WTC11 (cell line): ENCODE measurements at regions of chr15 and their contacts with region 1.

Region 1: GRCh38 chr15:89430530-89431341 is 65.6 kb downstream of the RHCG start:
- DNase-seq: peak; percentile 96
- ATAC-seq: peak; percentile 95
- H3K4me3 Mint-ChIP-seq: peak overlapping the region; percentile 72
- H3K27ac Mint-ChIP-seq: no peak overlapping the region
- H3K4me1 Mint-ChIP-seq: peaks cover 15% of the 10 kb centered on the region
- H3K27me3 Mint-ChIP-seq: peaks cover 32% of the 10 kb centered on the region
- CTCF ChIP-seq: peak; percentile 100

Region 2: GRCh38 chr15:89197503-89197971 is 233.2 kb before region 1 on chr15:
- CTCF ChIA-PET with region 1: no interaction called
- POLR2A ChIA-PET with region 1: no interaction called
- DNase-seq: peak; percentile 72
- ATAC-seq: peak; percentile 84
- H3K4me3 Mint-ChIP-seq: peak overlapping the region; percentile 5; the same call in 1 of the 2 replicates
- H3K27ac Mint-ChIP-seq: peak overlapping the region; percentile 85
- H3K4me1 Mint-ChIP-seq: peaks cover 63% of the 10 kb centered on the region
- H3K27me3 Mint-ChIP-seq: no peaks in the 10 kb centered on the region
- CTCF ChIP-seq: no peak

Region 3: GRCh38 chr15:89472785-89473256 is 42.1 kb after region 1 on chr15:
- CTCF ChIA-PET with region 1: interaction called, 10 read pairs
- POLR2A ChIA-PET with region 1: no interaction called
- DNase-seq: peak; percentile 95
- ATAC-seq: peak; percentile 92
- H3K4me3 Mint-ChIP-seq: no peak overlapping the region
- H3K27ac Mint-ChIP-seq: no peak overlapping the region
- H3K4me1 Mint-ChIP-seq: peaks cover 26% of the 10 kb centered on the region
- H3K27me3 Mint-ChIP-seq: peaks cover 30% of the 10 kb centered on the region
- CTCF ChIP-seq: peak; percentile 86